Naive thymus-derived CD4-positive, alpha-beta T cell (primary cell): ENCODE measurements at regions of chr5 and their contacts with region 1.

Region 1: GRCh38 chr5:111364992-111365391 is 140.8 kb downstream of the CAMK4 start:
- DNase-seq: peak in 3 of 9 donors; percentile 18 to 36 (median 27)
- ATAC-seq: no peak
- H3K4me3 ChIP-seq: no peak overlapping the region
- H3K4me3 Mint-ChIP-seq: peak overlapping the region in 4 of 10 donors; percentile 2 to 37 (median 20)
- H3K27ac ChIP-seq: no peak overlapping the region
- H3K27ac Mint-ChIP-seq: peak overlapping the region in 5 of 9 donors; percentile 0 to 83 (median 49)
- H3K4me1 ChIP-seq: peaks cover 0 to 23% of the 10 kb centered on the region in 2 donors
- H3K4me1 Mint-ChIP-seq: peaks cover 7 to 88% (median 56%) of the 10 kb centered on the region in 7 donors
- H3K27me3 ChIP-seq: no peaks in the 10 kb centered on the region
- H3K27me3 Mint-ChIP-seq: no peaks in the 10 kb centered on the region

Region 2: GRCh38 chr5:111308951-111309350 is 56.0 kb before region 1 on chr5:
- CTCF ChIA-PET with region 1: no interaction called
- POLR2A ChIA-PET with region 1: no interaction called
- intact Hi-C with region 1: no loop called
- DNase-seq: no peak
- ATAC-seq: no peak
- H3K4me3 ChIP-seq: no peak overlapping the region
- H3K4me3 Mint-ChIP-seq: peak overlapping the region in 6 of 10 donors; percentile 0 to 35 (median 25)
- H3K27ac ChIP-seq: no peak overlapping the region
- H3K27ac Mint-ChIP-seq: peak overlapping the region in 8 of 9 donors; percentile 19 to 67 (median 62)
- H3K4me1 ChIP-seq: peaks cover 2 to 17% of the 10 kb centered on the region in 2 donors
- H3K4me1 Mint-ChIP-seq: peaks cover 30 to 55% (median 54%) of the 10 kb centered on the region in 7 donors
- H3K27me3 ChIP-seq: no peaks in the 10 kb centered on the region
- H3K27me3 Mint-ChIP-seq: no peaks in the 10 kb centered on the region

Region 3: DNA sequence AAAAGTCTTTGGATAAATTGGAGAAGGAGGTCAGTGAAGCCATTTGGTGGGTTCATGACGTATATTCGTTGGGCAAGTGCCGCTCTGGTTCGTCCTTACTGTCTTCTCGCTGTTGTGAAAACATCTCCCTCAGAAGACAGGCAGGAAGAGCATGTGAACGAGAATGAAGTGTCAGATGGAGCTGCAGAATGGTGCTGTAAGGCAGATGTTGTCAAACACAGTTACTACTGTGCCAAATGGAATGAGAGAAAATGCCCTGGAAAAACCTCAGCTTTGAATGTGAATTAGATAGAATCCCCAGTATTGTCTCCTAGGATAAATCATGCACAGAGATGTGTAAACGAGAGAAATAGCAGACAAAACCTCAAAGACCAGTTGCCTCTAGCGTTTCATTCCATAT is 19.3 kb before region 1 on chr5:
- CTCF ChIA-PET with region 1: no interaction called
- POLR2A ChIA-PET with region 1: no interaction called
- intact Hi-C with region 1: loop called in 1 of 2 experiments (anchors 2 kb)
- DNase-seq: no peak
- ATAC-seq: no peak
- H3K4me3 ChIP-seq: no peak overlapping the region
- H3K4me3 Mint-ChIP-seq: peak overlapping the region in 2 of 10 donors; percentile 29 to 35
- H3K27ac ChIP-seq: no peak overlapping the region
- H3K27ac Mint-ChIP-seq: peak overlapping the region in 6 of 9 donors; percentile 17 to 75 (median 44)
- H3K4me1 ChIP-seq: peaks cover 4 to 12% of the 10 kb centered on the region in 2 donors
- H3K4me1 Mint-ChIP-seq: peaks cover 9 to 91% (median 65%) of the 10 kb centered on the region in 7 donors
- H3K27me3 ChIP-seq: no peaks in the 10 kb centered on the region
- H3K27me3 Mint-ChIP-seq: no peaks in the 10 kb centered on the region